Left colon (tissue), 2 donors: ENCODE measurements at regions of chr6 and their contacts with region 1.

Region 1: DNA sequence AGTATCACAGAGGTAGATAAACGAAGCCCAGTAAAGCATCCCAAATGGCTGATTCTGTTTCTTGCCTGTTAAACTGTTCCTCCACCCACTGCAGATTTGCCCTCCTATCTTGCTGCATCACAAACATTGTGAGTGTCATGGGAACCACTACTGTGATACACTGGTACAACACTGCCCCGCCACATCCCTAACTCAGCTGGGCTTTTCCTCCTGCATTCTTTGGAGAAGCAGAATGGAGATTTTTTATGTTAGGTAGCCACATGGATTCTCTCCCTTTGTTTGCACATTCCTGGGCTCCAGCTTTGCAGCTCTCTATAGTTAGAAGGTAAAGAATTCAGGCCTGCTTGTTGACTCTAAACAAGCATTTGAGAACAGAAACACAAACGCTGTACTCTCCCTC is 234.1 kb downstream of the TMEM242 start:
- DNase-seq: no peak
- ATAC-seq: no peak

Region 2: DNA sequence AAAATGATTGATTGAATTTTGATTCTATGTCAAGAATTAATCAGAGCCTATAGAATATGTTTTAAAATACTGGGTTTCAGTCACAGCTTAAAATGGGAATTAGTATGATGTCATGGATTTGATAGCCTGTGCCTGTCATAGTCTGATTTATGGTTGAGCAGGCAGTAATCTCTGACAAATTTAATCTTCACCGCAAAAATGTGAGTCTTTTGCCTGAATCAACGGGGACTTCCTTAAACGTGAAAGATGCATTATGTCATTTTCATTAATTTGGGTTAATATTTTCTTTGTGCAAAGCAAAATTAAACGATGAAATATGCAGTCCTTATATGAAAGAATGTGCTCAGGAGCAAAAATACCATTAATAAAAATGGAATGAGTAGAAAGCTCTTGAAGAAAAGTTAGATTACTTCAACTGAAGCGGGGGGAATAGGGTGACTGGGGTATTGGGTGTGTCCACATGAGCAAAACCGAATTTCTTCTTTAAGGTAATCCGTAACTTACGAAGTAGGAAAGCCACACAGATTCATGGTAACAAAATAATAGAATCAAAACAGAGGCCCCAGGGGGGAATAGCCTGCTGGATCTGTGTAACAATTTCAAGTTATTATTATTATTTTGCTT is 1294.0 kb before region 1 on chr6:
- intact Hi-C with region 1: loop called in 1 of 2 experiments (anchors 10 kb)
- DNase-seq: no peak
- ATAC-seq: no peak

Region 3: GRCh38 chr6:156674197-156674596 is 415.1 kb before region 1 on chr6:
- intact Hi-C with region 1: no loop called
- DNase-seq: no peak
- ATAC-seq: no peak

Region 4: GRCh38 chr6:156916130-156916801 is 173.0 kb before region 1 on chr6:
- intact Hi-C with region 1: no loop called
- DNase-seq: no peak
- ATAC-seq: no peak